Sigmoid colon (tissue), 7 donors: ENCODE measurements at regions of chrX and their contacts with region 1.

Region 1: GRCh38 chrX:153927922-153928760 is 2.1 kb upstream of the ARHGAP4 start:
- DNase-seq: peak; percentile 98
- H3K4me3 ChIP-seq: peak overlapping the region; percentile 42 to 63 (median 60)
- H3K27ac ChIP-seq: peak overlapping the region; percentile 90 to 96 (median 95)
- H3K4me1 ChIP-seq: peaks cover 0 to 29% (median 21%) of the 10 kb centered on the region in 4 donors
- H3K27me3 ChIP-seq: no peaks in the 10 kb centered on the region
- CTCF ChIP-seq: peak in 1 of 4 experiments; percentile 25
- EP300 ChIP-seq: no peak
- POLR2A ChIP-seq: peak in 1 of 2 donors; percentile 30

Region 2: DNA sequence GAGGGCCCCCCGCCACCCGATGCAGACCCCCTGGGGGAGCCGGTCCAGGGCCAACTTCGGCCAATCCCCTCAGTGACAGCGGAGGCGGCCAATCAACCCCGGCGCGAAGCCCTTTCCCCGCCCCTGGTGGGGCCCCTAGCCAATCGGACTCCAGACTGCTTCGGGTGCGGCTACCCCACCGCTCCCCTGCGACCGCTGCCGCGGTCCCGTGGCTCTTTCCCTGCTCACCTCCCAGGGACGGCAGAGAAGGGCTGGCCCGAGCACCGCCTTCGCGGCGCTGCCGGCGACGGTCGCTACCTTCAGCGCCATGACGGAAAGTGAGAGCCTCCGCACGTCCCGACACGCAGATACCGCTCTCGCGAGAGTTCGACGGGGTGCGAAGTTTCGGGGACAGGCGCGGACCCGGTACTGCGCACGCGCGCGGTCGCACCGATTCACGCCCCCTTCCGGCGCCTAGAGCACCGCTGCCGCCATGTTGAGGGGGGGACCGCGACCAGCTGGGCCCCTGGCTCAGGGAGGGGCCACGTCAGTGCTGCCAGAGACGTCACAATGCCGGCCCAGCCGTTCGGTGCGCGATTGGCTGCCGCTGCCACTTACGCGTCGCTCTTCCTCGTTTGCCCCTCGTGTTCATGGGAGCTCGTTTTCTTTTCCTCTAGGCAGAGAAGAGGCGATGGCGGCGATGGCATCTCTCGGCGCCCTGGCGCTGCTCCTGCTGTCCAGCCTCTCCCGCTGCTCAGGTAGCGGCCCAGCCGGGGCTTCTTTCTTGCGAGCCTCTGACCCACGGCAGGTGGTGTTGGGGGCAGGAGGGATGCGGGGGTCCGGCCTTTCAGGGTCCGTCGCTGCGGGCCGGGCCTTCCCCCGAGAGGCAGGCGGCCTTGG is 133.9 kb before region 1 on chrX and contains the starts of genes IDH3G and SSR4:
- intact Hi-C with region 1: loop called (anchors 5 kb)
- DNase-seq: peak; percentile 97
- H3K4me3 ChIP-seq: peak within 1 kb of the TSS; percentile 59 to 71 (median 62)
- H3K27ac ChIP-seq: peak within 1 kb of the TSS; percentile 89 to 98 (median 94)
- H3K4me1 ChIP-seq: peaks cover 0 to 32% (median 29%) of the 10 kb centered on the region in 4 donors
- H3K27me3 ChIP-seq: no peaks in the 10 kb centered on the region
- CTCF ChIP-seq: no peak
- EP300 ChIP-seq: no peak
- POLR2A ChIP-seq: peak; percentile 32 to 57
- total RNA-seq, gene IDH3G: 54.2 to 89.5 (median 62.7) TPM
- total RNA-seq, gene SSR4: 143 to 177 (median 156) TPM

Region 3: DNA sequence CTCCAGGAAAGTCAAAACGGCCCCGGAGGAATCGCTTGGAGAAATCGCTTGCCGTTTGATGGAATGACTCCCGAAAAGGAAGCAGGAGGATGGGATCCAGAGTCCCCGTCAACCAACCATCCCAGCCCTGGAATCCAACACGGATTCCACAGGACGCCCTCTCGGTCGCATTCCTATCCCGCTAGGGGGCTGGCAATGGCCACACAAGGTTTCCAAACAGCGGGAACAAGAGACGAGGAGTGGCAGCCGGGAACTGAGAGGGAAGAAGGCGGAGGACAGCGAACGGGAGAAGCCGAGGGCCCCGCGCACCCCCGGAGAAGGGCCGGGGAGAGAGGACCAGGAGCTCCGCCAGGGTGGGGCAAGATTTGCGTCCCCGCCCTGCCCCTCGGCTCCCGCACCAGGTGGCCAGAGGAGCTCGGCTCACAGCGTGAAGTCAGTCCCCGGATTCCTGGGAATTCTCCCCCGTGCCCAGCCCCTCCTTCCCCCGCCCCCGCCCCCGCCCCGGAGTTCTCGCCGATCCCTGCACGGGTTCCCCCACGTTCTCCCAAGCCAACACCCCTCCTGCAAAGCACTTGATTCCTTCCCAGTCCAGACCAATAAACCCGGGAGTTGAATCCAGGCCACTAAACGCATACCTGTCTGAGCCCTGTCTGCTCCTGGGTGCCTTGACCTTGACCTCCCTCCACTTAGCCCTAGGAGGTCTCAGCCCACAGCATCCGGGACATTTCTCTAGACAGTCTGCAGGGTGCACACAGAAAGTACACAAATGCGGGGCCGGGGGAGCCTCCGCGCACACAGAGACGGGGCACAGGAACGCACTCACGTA is 99.2 kb before region 1 on chrX:
- intact Hi-C with region 1: loop called (anchors 2 kb)
- DNase-seq: peak; percentile 52
- H3K4me3 ChIP-seq: peak overlapping the region; percentile 34 to 59 (median 52)
- H3K27ac ChIP-seq: peak overlapping the region; percentile 69 to 79 (median 76)
- H3K4me1 ChIP-seq: peaks cover 0 to 22% (median 4%) of the 10 kb centered on the region in 4 donors
- H3K27me3 ChIP-seq: peaks cover 0 to 7% (median 0%) of the 10 kb centered on the region in 3 donors
- CTCF ChIP-seq: no peak
- EP300 ChIP-seq: no peak
- POLR2A ChIP-seq: no peak

Region 4: GRCh38 chrX:153971450-153972367 is 43.6 kb after region 1 on chrX and contains the start of gene HCFC1:
- intact Hi-C with region 1: loop called (anchors 1 kb)
- DNase-seq: peak; percentile 98
- H3K4me3 ChIP-seq: peak within 1 kb of the TSS; percentile 55 to 78 (median 74)
- H3K27ac ChIP-seq: peak within 1 kb of the TSS; percentile 97 to 98 (median 98)
- H3K4me1 ChIP-seq: peaks cover 0 to 48% (median 42%) of the 10 kb centered on the region in 4 donors
- H3K27me3 ChIP-seq: peaks cover 0 to 5% (median 0%) of the 10 kb centered on the region in 3 donors
- CTCF ChIP-seq: no peak
- EP300 ChIP-seq: no peak
- POLR2A ChIP-seq: peak; percentile 7
- total RNA-seq, gene HCFC1: 23.5 to 57.3 (median 30.2) TPM